Naive thymus-derived CD4-positive, alpha-beta T cell (primary cell): ENCODE measurements at regions of chr5 and their contacts with region 1.

Region 1: DNA sequence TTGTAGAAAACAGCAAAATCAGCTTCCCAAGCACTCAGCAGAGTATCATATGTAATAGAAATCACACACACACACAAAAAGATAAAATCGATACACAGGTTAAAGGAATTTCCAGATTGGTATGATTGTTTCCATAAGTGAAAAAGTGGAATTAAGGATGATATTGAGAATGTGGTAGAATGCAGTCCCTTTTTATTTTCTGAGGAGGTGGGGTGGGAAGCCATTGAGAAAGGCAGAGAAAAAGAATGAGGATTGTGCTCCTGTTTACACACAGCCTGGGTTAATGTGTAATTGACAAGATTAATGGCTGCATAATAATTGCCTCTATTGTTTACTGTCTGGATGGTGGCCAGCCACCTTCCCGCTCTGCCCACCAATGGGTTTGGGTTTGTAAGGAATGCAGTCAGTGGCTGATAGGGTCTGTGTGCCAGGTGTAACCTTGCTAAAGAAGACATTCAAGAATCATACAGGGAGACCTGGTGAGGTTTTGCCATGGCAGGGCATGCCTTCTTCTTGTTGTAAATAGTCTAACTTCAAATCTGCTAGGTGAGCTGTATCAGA is 177.2 kb upstream of the MAP3K1 start:
- DNase-seq: no peak
- ATAC-seq: peak; percentile 7
- H3K4me3 ChIP-seq: no peak overlapping the region
- H3K4me3 Mint-ChIP-seq: no peak overlapping the region
- H3K27ac ChIP-seq: peak overlapping the region; percentile 66
- H3K27ac Mint-ChIP-seq: peak overlapping the region in 3 of 9 donors; percentile 69 to 94 (median 93)
- H3K4me1 ChIP-seq: peaks cover 0 to 12% of the 10 kb centered on the region in 2 donors
- H3K4me1 Mint-ChIP-seq: peaks cover 0 to 48% (median 21%) of the 10 kb centered on the region in 7 donors
- H3K27me3 ChIP-seq: no peaks in the 10 kb centered on the region
- H3K27me3 Mint-ChIP-seq: peaks cover 0 to 22% (median 0%) of the 10 kb centered on the region in 5 donors

Region 2: GRCh38 chr5:56617998-56618397 is 20.1 kb before region 1 on chr5:
- CTCF ChIA-PET with region 1: no interaction called
- POLR2A ChIA-PET with region 1: interaction called, 3 read pairs
- intact Hi-C with region 1: loop called in 1 of 2 experiments (anchors 2 kb)
- DNase-seq: no peak
- ATAC-seq: no peak
- H3K4me3 ChIP-seq: no peak overlapping the region
- H3K4me3 Mint-ChIP-seq: no peak overlapping the region
- H3K27ac ChIP-seq: no peak overlapping the region
- H3K27ac Mint-ChIP-seq: no peak overlapping the region
- H3K4me1 ChIP-seq: peaks cover 18 to 41% of the 10 kb centered on the region in 2 donors
- H3K4me1 Mint-ChIP-seq: peaks cover 20 to 58% (median 41%) of the 10 kb centered on the region in 7 donors
- H3K27me3 ChIP-seq: no peaks in the 10 kb centered on the region
- H3K27me3 Mint-ChIP-seq: no peaks in the 10 kb centered on the region

Region 3: GRCh38 chr5:56648460-56649034 is 10.4 kb after region 1 on chr5:
- CTCF ChIA-PET with region 1: no interaction called
- POLR2A ChIA-PET with region 1: interaction called, 7 read pairs
- intact Hi-C with region 1: loop called in 1 of 2 experiments (anchors 1 kb)
- DNase-seq: no peak
- ATAC-seq: no peak
- H3K4me3 ChIP-seq: no peak overlapping the region
- H3K4me3 Mint-ChIP-seq: peak overlapping the region in 3 of 10 donors; percentile 11 to 34 (median 27)
- H3K27ac ChIP-seq: no peak overlapping the region
- H3K27ac Mint-ChIP-seq: peak overlapping the region in 1 of 9 donors; percentile 16
- H3K4me1 ChIP-seq: peaks cover 0 to 23% of the 10 kb centered on the region in 2 donors
- H3K4me1 Mint-ChIP-seq: peaks cover 21 to 64% (median 50%) of the 10 kb centered on the region in 7 donors
- H3K27me3 ChIP-seq: no peaks in the 10 kb centered on the region
- H3K27me3 Mint-ChIP-seq: peaks cover 0 to 15% (median 0%) of the 10 kb centered on the region in 5 donors